Heart left ventricle (tissue), 16 donors: ENCODE measurements at regions of chr5 and their contacts with region 1.

Region 1: GRCh38 chr5:153504726-153505125 is 14.3 kb downstream of the GRIA1 start:
- DNase-seq: no peak
- ATAC-seq: no peak
- H3K4me3 ChIP-seq: no peak overlapping the region
- H3K27ac ChIP-seq: no peak overlapping the region
- H3K4me1 ChIP-seq: no peaks in the 10 kb centered on the region
- H3K27me3 ChIP-seq: no peaks in the 10 kb centered on the region
- CTCF ChIP-seq: no peak
- POLR2A ChIP-seq: no peak

Region 2: GRCh38 chr5:153629027-153629895 is 124.5 kb after region 1 on chr5:
- intact Hi-C with region 1: loop called in 1 of 10 experiments (anchors 5 kb)
- DNase-seq: peak in 1 of 5 donors; percentile 38
- ATAC-seq: peak; percentile 56 to 63 (median 61)
- H3K4me3 ChIP-seq: no peak overlapping the region
- H3K27ac ChIP-seq: peak overlapping the region in 9 of 12 donors; percentile 4 to 70 (median 18)
- H3K4me1 ChIP-seq: peaks cover 0 to 38% (median 16%) of the 10 kb centered on the region in 12 donors
- H3K27me3 ChIP-seq: no peaks in the 10 kb centered on the region
- CTCF ChIP-seq: peak in 5 of 12 donors; percentile 6 to 42 (median 23)
- POLR2A ChIP-seq: no peak

Region 3: DNA sequence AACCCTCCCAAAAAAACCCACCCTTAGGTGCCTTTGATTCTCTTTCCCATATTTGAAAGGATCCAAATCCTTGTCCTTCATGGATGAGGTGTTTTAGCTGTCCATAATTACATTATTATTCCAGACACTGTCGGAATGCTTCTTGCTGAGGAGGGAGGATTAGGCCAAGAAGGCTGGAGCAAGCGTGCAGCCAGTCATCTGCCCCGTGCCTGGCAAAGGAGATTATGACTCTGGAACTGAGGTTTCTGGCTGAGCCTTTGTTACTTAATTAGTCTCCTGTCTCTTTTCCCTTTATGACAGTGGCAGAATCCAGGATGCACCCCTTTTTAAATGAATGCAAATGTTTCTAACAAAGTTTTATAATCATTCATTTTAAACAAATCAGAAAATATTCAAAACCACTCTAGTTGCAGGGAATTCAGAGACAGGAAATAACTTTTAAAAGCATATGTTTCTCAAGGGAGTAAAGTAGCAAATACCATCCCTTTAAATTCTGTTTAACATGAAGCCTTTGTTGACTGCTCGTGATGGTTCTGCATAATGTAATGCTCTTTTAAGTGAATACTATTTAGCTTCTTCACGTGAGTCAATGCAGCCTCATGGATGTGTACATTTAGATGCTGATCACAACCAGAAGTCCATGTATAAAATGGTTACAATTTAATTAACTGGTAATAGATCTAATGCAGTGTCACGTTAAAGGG is 755.6 kb after region 1 on chr5:
- intact Hi-C with region 1: no loop called
- DNase-seq: no peak
- ATAC-seq: peak in 2 of 4 donors; percentile 32 to 46
- H3K4me3 ChIP-seq: no peak overlapping the region
- H3K27ac ChIP-seq: peak overlapping the region in 1 of 12 donors; percentile 16
- H3K4me1 ChIP-seq: peaks cover 0 to 29% (median 15%) of the 10 kb centered on the region in 12 donors
- H3K27me3 ChIP-seq: no peaks in the 10 kb centered on the region
- CTCF ChIP-seq: no peak
- POLR2A ChIP-seq: no peak